ENCODE measurements at regions of chr9 and their contacts with region 1.

Region 1: DNA sequence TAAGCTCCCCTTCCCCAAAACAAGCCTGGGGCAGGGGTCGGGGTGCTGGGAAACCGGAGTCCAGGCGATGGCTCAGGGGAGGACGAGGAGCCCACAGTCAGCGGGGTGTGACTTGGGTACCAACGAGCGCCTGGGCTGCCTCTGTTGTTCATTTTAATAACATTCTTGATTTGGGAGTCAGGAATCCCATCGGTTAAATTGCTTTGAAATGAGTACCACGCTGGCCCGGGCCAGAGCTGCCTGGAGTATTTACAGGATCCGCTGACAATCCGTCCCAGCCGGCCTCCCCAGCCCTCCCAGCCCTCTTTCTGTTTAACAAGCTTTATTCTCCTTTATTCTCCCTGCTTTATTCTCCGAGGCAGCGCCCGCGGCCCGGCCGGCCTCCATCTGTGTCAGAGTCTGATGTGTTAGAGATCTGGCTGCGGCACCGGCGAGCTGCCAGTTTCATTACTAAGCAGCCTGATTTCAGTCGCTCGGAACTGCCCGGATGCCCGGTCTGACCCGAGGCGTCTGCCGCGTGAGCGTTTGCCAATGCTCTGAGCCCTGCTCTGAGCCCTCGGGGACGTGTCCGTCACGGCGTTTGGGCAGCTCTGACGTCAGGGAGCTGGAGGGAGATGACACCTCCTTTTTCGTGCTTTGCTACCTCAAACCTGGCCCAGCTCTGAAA is 16.5 kb upstream of the QRFP start:
- DNase-seq: peak in 3 of 4 experiments; percentile 67 to 68 (median 67)
- ATAC-seq: peak; percentile 9
- H3K4me3 ChIP-seq: no peak overlapping the region
- H3K27ac ChIP-seq: no peak overlapping the region
- H3K4me1 ChIP-seq: peaks cover 0 to 57% of the 10 kb centered on the region in 2 experiments; a peak in 2 of 5 replicates
- H3K27me3 ChIP-seq: peaks cover 83 to 88% of the 10 kb centered on the region in 2 experiments
- CTCF ChIP-seq: peak in 1 of 3 experiments; percentile 4; a peak in 1 of 6 replicates
- EP300 ChIP-seq: no peak
- POLR2A ChIP-seq: no peak
- RAD21 ChIP-seq: no peak

Region 2: GRCh38 chr9:130893341-130894101 is 19.5 kb before region 1 on chr9:
- CTCF ChIA-PET with region 1: interaction called, 3 read pairs
- POLR2A ChIA-PET with region 1: interaction called, 334 read pairs
- in situ Hi-C with region 1: no loop called
- intact Hi-C with region 1: no loop called
- DNase-seq: peak; percentile 58 to 90 (median 72)
- ATAC-seq: peak; percentile 73
- H3K4me3 ChIP-seq: no peak overlapping the region
- H3K27ac ChIP-seq: no peak overlapping the region
- H3K4me1 ChIP-seq: peaks cover 6 to 56% of the 10 kb centered on the region in 2 experiments; a peak in 4 of 5 replicates
- H3K27me3 ChIP-seq: peaks cover 23 to 33% of the 10 kb centered on the region in 2 experiments; a peak in 4 of 5 replicates
- CTCF ChIP-seq: no peak
- EP300 ChIP-seq: no peak
- POLR2A ChIP-seq: no peak
- RAD21 ChIP-seq: no peak

Region 3: DNA sequence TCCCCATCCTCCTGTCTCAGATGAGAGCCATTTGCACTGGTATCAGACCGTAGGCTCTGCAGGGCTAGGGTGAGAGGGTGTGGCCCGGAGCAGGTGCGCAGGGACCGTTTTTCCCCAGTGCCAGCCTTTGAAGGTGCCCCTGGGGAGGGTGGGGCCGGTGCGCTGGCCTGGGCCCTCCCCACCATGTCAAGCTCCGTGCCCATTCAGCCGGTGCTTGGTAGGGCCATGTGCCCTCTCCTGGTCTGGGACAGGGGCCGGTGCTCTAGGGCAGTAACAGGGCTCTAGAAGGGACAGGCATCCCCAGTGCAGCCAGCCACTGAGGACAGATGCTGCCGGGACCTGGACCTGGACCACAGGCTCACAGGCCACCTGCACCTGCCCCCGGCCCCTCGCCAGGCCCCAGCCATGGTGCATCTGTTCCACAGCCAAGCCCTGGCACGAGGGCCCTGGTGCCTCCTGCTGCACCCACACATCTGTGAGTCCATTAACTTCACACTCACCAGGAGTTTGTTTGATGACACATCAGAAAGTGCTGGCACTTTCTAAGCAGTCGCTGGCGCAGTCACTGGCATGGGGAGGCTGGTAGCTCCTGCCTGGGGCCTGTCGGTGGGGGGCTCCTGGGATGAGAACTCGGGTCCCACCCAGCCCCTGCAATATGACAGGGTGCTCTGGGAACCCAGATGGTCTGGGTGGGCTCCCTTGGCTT is 11.4 kb before region 1 on chr9:
- CTCF ChIA-PET with region 1: interaction called, 4 read pairs
- POLR2A ChIA-PET with region 1: interaction called, 582 read pairs
- in situ Hi-C with region 1: no loop called
- intact Hi-C with region 1: no loop called
- DNase-seq: peak in 3 of 4 experiments; percentile 54 to 65 (median 60)
- ATAC-seq: no peak
- H3K4me3 ChIP-seq: no peak overlapping the region
- H3K27ac ChIP-seq: no peak overlapping the region
- H3K4me1 ChIP-seq: peaks cover 0 to 74% of the 10 kb centered on the region in 2 experiments; a peak in 2 of 5 replicates
- H3K27me3 ChIP-seq: peaks cover 87 to 95% of the 10 kb centered on the region in 2 experiments
- CTCF ChIP-seq: no peak
- EP300 ChIP-seq: no peak
- POLR2A ChIP-seq: no peak
- RAD21 ChIP-seq: no peak

Region 4: GRCh38 chr9:130927995-130928900 is 15.2 kb after region 1 on chr9:
- CTCF ChIA-PET with region 1: no interaction called
- POLR2A ChIA-PET with region 1: interaction called, 582 read pairs
- in situ Hi-C with region 1: no loop called
- intact Hi-C with region 1: no loop called
- DNase-seq: peak in 3 of 4 experiments; percentile 64 to 73 (median 66)
- ATAC-seq: no peak
- H3K4me3 ChIP-seq: no peak overlapping the region
- H3K27ac ChIP-seq: no peak overlapping the region
- H3K4me1 ChIP-seq: peaks cover 0 to 52% of the 10 kb centered on the region in 2 experiments; a peak in 2 of 5 replicates
- H3K27me3 ChIP-seq: peaks cover 95 to 100% of the 10 kb centered on the region in 2 experiments
- CTCF ChIP-seq: no peak
- EP300 ChIP-seq: no peak
- POLR2A ChIP-seq: no peak
- RAD21 ChIP-seq: no peak

Region 5: DNA sequence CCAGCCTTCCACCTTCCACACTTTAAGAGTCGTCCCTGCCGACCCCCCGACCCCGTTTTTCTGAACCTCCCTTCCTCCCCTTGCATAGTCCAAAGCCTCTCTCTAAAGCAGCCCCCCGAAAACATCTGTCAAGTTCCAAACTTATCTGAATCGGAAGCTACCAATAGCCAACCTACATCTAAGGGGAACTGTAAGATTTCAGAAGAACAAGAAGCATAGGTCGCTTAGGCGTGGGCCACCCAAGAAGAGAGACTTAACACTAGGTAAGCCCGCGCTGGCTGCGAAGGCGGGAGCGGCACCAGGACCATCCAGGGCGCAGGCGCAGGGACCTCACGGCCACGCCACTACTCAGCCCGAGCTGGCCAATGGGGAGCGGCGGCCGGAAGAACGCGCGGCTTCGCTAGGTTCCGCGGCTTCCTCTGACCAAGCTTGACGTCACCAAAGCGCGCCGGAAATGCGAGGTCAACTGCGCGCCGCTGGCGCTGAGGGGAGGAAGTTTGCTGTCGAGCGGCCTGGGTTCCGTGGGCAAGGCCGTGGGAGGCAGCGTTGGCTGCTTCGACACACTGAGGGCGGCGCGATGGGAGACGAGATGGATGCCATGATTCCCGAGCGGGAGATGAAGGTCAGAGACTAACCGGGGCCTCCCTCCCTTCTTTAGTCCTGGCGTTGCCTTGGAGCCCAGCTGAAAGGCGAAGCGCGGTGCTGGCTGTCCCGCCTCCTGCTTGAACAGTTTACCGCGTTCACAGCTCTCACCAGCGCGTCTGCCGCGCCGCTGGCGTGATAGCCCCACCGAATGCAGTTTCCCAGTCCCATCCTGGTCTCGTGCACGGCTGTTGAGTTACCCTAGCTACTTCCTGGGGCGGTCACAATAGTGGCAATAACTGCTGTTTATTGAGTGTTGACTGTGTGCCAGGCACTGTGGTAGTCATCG is 212.3 kb after region 1 on chr9 and contains the start of gene NUP214:
- CTCF ChIA-PET with region 1: no interaction called
- POLR2A ChIA-PET with region 1: no interaction called
- in situ Hi-C with region 1: no loop called
- intact Hi-C with region 1: no loop called
- DNase-seq: peak; percentile 98 to 100 (median 100)
- ATAC-seq: peak; percentile 98
- H3K4me3 ChIP-seq: peak within 1 kb of the TSS; percentile 48
- H3K27ac ChIP-seq: peak within 1 kb of the TSS; percentile 76
- H3K4me1 ChIP-seq: peaks cover 13 to 23% of the 10 kb centered on the region in 2 experiments
- H3K27me3 ChIP-seq: peaks cover 13 to 14% of the 10 kb centered on the region in 2 experiments; a peak in 4 of 5 replicates
- CTCF ChIP-seq: no peak
- EP300 ChIP-seq: no peak
- POLR2A ChIP-seq: no peak
- RAD21 ChIP-seq: no peak
- polyA plus RNA-seq, gene NUP214: 78.9 to 81.6 TPM

Measured in K562 (cell line).